ENCODE measurements at regions of chr3 and their contacts with region 1.

Region 1: GRCh38 chr3:194315088-194315964 is 35.8 kb downstream of the CPN2 start:
- DNase-seq: peak; percentile 89
- ATAC-seq: peak; percentile 89
- H3K4me3 Mint-ChIP-seq: peak overlapping the region; percentile 43
- H3K27ac Mint-ChIP-seq: peak overlapping the region; percentile 3
- H3K4me1 Mint-ChIP-seq: peaks cover 8% of the 10 kb centered on the region
- H3K27me3 Mint-ChIP-seq: peaks cover 21% of the 10 kb centered on the region

Region 2: DNA sequence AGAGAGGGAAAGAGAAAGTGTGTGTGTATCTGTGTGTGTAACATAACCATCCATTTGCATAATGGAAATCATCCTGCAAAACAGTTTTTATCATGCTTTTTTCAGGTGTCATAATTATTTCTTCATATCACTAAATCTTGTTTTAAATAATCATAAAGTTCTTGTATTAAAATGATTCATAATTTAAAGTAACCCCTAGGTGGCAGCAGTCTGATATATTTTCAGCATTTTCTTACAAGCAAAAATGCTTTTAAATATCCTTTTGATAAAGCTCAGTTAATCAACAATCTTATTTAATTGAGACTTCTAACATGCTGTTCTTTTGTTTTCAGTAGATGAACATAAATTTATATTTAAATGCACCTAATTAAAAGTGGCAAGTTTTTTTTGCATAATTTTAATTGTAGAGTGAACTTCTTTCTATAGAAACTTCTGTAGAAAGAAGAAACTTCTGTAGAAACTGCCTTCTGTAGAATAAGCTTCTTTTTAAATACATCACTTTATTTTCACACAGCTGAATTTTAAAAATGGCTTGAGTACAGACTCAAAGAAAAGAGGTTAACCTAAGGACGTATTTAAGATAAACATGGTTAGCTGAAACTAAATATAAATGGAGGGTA is 649.8 kb before region 1 on chr3:
- CTCF ChIA-PET with region 1: interaction called, 24 read pairs
- POLR2A ChIA-PET with region 1: no interaction called
- intact Hi-C with region 1: loop called (anchors 1 to 2 kb)
- DNase-seq: no peak
- ATAC-seq: no peak
- H3K4me3 Mint-ChIP-seq: no peak overlapping the region
- H3K27ac Mint-ChIP-seq: no peak overlapping the region
- H3K4me1 Mint-ChIP-seq: no peaks in the 10 kb centered on the region
- H3K27me3 Mint-ChIP-seq: no peaks in the 10 kb centered on the region

Region 3: DNA sequence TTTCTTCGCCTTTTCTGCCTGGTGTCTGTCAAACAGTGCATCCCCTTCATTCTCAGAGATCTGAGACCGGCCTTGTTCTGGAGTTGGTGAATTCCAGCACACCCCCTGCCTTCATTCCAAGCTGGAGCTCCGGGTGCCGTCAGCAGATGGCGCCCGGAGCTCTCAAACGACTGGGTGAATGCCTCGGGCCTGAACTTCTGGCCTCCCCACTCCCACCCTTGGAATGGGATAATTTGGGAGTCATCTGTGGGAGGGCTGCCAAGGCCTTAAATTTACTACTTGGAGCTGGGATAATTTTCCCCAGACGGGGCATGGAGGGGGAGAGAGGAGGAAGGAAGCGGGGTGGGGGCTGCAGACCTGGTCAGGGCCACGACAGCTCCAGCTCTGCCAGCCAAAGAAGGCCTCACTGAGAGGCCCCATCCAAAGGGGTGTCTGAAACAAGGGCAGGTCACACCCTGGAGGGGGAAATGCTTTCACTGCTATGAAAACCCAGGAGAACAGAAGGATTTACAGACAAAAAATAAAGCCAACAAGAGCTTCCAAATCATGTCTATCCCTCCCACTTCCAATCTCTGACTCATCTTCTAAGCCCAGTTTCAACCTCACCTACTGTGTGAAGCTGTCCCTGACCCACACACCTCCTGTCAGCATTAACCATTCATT is 534.4 kb before region 1 on chr3:
- CTCF ChIA-PET with region 1: interaction called, 54 read pairs
- POLR2A ChIA-PET with region 1: no interaction called
- intact Hi-C with region 1: loop called (anchors 1 to 2 kb)
- DNase-seq: peak; percentile 65
- ATAC-seq: peak; percentile 53
- H3K4me3 Mint-ChIP-seq: no peak overlapping the region
- H3K27ac Mint-ChIP-seq: no peak overlapping the region
- H3K4me1 Mint-ChIP-seq: peaks cover 6% of the 10 kb centered on the region
- H3K27me3 Mint-ChIP-seq: peaks cover 26% of the 10 kb centered on the region

Region 4: GRCh38 chr3:193788189-193788991 is 526.9 kb before region 1 on chr3:
- CTCF ChIA-PET with region 1: interaction called, 6 read pairs
- POLR2A ChIA-PET with region 1: no interaction called
- intact Hi-C with region 1: loop called in 1 of 2 experiments (anchors 1 kb)
- DNase-seq: peak; percentile 47
- ATAC-seq: peak; percentile 75
- H3K4me3 Mint-ChIP-seq: no peak overlapping the region
- H3K27ac Mint-ChIP-seq: no peak overlapping the region
- H3K4me1 Mint-ChIP-seq: no peaks in the 10 kb centered on the region
- H3K27me3 Mint-ChIP-seq: peaks cover 10% of the 10 kb centered on the region

Region 5: DNA sequence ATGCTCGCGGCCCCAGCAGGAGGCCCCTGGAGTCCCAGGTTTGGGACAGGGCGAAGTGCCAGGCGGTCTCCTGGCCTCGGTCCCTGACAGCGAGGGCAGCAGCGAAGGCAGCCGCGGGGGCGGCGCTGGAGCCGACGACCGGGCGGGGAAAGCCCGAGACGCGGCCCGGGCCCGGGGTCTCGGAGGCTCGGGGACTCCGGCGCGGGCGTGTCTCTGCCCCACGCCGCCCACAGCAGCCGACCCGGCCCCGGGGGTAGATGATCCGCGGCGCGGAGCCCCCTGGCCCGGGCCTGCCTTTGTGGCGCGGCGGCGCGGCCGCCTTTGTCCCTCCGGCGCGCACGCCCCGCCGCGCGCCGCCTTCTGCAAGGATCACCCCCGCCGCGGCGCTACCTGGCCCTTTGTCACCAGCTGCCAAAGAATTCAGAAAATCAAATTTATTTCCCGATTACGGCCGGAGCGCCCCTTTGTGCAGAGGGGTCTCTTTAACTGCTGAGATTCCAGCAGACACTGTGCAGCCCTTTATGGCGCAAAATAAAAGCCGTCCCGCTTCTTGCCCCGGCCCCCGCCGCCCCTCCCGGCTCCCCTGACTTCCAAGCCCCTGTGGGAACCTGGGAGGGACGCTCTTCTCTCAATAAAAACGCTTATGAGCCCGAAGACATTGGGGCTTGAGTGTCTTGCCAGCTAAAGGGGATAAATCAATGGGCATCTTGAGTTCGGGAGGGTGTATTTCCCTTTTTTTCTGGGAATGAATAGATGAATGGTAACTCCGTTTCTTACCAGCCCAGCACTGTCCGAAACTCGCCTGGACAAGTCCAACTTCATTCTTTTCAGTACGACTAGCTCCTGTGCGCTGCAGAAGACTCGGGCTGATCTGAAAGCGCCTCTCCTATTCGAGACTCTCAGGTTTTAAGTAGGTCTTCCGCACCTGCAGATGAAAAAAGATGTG is 111.0 kb before region 1 on chr3:
- CTCF ChIA-PET with region 1: interaction called, 8 read pairs
- POLR2A ChIA-PET with region 1: no interaction called
- intact Hi-C with region 1: loop called (anchors 1 to 10 kb)
- DNase-seq: peak; percentile 50
- ATAC-seq: peak; percentile 49
- H3K4me3 Mint-ChIP-seq: peak overlapping the region; percentile 68
- H3K27ac Mint-ChIP-seq: peak overlapping the region; percentile 64
- H3K4me1 Mint-ChIP-seq: peaks cover 28% of the 10 kb centered on the region
- H3K27me3 Mint-ChIP-seq: peaks cover 19% of the 10 kb centered on the region

Region 6: GRCh38 chr3:194255252-194256039 is 59.9 kb before region 1 on chr3:
- CTCF ChIA-PET with region 1: interaction called, 3 read pairs
- POLR2A ChIA-PET with region 1: no interaction called
- intact Hi-C with region 1: loop called in 1 of 2 experiments (anchors 1 kb)
- DNase-seq: peak; percentile 74
- ATAC-seq: peak; percentile 91
- H3K4me3 Mint-ChIP-seq: peak overlapping the region; percentile 20
- H3K27ac Mint-ChIP-seq: peak overlapping the region; percentile 82
- H3K4me1 Mint-ChIP-seq: peaks cover 10% of the 10 kb centered on the region
- H3K27me3 Mint-ChIP-seq: no peaks in the 10 kb centered on the region